ENCODE measurements at regions of chr15 and their contacts with region 1.

Region 1: GRCh38 chr15:42575188-42576039 is at the start of gene STARD9:
- DNase-seq: peak; percentile 96 to 98
- ATAC-seq: peak; percentile 95 to 96
- H3K4me3 ChIP-seq: peak within 1 kb of the TSS; percentile 85 to 97 (median 91)
- H3K27ac ChIP-seq: peak within 1 kb of the TSS; percentile 85 to 93 (median 87)
- H3K4me1 ChIP-seq: peaks cover 14 to 15% of the 10 kb centered on the region in 2 donors
- H3K27me3 ChIP-seq: peaks cover 0 to 5% (median 0%) of the 10 kb centered on the region in 3 donors
- CTCF ChIP-seq: peak in 1 of 5 experiments; percentile 10
- POLR2A ChIP-seq: peak; percentile 56 to 87
- total RNA-seq, gene STARD9: 1.6 to 3.5 (median 2.0) TPM

Region 2: DNA sequence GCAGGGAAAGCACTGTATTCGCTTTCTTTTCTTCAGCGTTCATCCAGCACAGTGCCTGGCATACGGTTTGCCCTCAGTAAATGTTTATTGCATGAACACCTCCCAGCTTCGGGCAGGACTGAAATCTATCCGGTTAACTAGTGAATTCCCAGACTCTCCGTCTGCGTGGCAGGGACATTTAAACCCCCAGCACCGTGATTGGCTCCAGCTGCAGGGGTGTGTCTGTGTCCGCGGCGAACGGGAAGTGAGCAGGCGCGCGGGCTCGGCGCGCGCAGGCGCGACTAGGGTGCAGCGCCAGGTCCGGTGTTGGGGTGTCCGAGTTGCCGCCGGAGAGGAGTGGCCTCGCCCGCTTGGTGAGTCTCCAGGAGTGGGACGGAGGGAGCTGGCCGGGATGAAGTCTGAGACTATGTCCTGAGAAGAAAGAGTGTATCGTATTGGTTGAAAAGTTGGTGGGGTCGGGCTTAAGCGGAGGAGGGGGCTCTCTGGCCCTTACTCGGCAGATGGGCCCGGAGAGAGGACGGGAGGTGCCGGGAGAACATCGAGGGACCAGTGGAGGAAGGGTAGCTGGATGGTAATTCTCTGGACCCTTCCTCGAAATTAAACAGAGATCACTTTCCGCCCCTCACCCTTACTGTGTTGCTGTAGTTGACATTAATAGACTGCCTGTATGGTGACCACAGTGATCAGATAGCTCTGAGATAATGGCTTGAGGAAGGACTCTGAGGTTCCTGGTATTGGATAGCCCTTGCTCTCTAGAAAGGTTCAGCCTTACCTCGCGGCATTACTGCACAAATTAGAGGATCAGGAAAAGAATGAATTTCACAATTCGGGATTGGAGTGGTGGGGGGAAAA is 79.8 kb before region 1 on chr15 and contains the start of gene SNAP23:
- in situ Hi-C with region 1: no loop called
- intact Hi-C with region 1: loop called (anchors 5 kb)
- DNase-seq: peak; percentile 94 to 96
- ATAC-seq: peak; percentile 85 to 90
- H3K4me3 ChIP-seq: peak within 1 kb of the TSS; percentile 73 to 92 (median 84)
- H3K27ac ChIP-seq: peak within 1 kb of the TSS; percentile 88 to 97 (median 96)
- H3K4me1 ChIP-seq: peaks cover 41 to 52% of the 10 kb centered on the region in 2 donors
- H3K27me3 ChIP-seq: no peaks in the 10 kb centered on the region
- CTCF ChIP-seq: no peak
- POLR2A ChIP-seq: peak; percentile 95 to 99
- total RNA-seq, gene SNAP23: 26.7 to 74.3 (median 40.2) TPM

Region 3: GRCh38 chr15:43067717-43068461 is 492.5 kb after region 1 on chr15:
- in situ Hi-C with region 1: no loop called
- intact Hi-C with region 1: no loop called
- DNase-seq: no peak
- ATAC-seq: no peak
- H3K4me3 ChIP-seq: no peak overlapping the region
- H3K27ac ChIP-seq: no peak overlapping the region
- H3K4me1 ChIP-seq: no peaks in the 10 kb centered on the region
- H3K27me3 ChIP-seq: no peaks in the 10 kb centered on the region
- CTCF ChIP-seq: no peak
- POLR2A ChIP-seq: no peak